Panc1 (cell line): ENCODE measurements at regions of chr20 and their contacts with region 1.

Region 1: GRCh38 chr20:43456809-43457639 is 672 bp upstream of the SRSF6 start:
- DNase-seq: no peak
- ATAC-seq: peak; percentile 91
- H3K4me3 ChIP-seq: peak overlapping the region; percentile 82 to 87
- H3K27ac ChIP-seq: peak overlapping the region; percentile 95
- H3K4me1 ChIP-seq: peaks cover 13% of the 10 kb centered on the region; the same call in 1 of the 2 replicates
- H3K27me3 ChIP-seq: no peaks in the 10 kb centered on the region
- CTCF ChIP-seq: no peak

Region 2: DNA sequence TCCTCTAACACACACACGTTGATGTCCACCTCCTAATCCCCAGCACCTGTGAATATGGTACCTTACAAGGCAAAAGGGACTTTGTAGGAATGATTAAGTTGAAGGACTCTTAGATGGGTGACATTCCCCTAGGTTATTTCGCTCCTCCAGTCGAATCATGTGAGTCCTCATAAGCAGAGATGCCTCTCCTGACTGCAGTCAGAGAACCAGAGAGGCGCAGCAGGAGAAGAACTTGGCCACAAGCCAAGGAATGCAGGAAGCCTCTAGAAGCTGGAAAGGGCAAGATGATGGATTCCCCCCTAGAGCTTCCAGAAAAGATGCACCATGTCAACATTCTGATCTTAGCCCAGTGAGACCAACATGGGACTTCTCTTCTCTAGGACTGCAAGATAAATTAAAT is 134.2 kb before region 1 on chr20:
- CTCF ChIA-PET with region 1: no interaction called
- POLR2A ChIA-PET with region 1: no interaction called
- in situ Hi-C with region 1: no loop called
- intact Hi-C with region 1: no loop called
- DNase-seq: no peak
- ATAC-seq: no peak
- H3K4me3 ChIP-seq: no peak overlapping the region
- H3K27ac ChIP-seq: no peak overlapping the region
- H3K4me1 ChIP-seq: no peaks in the 10 kb centered on the region
- H3K27me3 ChIP-seq: peaks cover 5% of the 10 kb centered on the region; the same call in 1 of the 2 replicates
- CTCF ChIP-seq: no peak

Region 3: DNA sequence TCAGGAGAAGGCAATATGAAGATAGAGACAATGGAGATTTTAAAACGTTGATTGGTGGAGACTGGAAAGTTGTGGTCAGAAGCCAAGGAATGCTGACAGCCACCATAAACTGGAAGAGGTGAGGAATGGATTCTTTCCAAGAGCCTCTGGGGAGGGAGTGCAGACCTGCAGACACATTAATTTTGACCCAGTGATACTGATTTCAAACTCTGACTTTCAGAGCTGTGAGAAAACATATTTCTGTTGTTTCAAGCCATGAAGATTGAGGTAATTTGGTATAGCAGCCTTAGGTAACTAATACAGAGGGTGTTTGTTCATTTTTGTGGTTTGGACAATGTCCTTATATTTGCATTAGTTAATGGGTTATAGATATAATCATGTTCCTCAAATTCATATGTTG is 355.1 kb after region 1 on chr20:
- CTCF ChIA-PET with region 1: no interaction called
- POLR2A ChIA-PET with region 1: interaction called, 10 read pairs
- in situ Hi-C with region 1: no loop called
- intact Hi-C with region 1: no loop called
- DNase-seq: no peak
- ATAC-seq: no peak
- H3K4me3 ChIP-seq: no peak overlapping the region
- H3K27ac ChIP-seq: no peak overlapping the region
- H3K4me1 ChIP-seq: no peaks in the 10 kb centered on the region
- H3K27me3 ChIP-seq: no peaks in the 10 kb centered on the region
- CTCF ChIP-seq: no peak